ENCODE measurements at regions of chr11 and their contacts with region 1.

Region 1: DNA sequence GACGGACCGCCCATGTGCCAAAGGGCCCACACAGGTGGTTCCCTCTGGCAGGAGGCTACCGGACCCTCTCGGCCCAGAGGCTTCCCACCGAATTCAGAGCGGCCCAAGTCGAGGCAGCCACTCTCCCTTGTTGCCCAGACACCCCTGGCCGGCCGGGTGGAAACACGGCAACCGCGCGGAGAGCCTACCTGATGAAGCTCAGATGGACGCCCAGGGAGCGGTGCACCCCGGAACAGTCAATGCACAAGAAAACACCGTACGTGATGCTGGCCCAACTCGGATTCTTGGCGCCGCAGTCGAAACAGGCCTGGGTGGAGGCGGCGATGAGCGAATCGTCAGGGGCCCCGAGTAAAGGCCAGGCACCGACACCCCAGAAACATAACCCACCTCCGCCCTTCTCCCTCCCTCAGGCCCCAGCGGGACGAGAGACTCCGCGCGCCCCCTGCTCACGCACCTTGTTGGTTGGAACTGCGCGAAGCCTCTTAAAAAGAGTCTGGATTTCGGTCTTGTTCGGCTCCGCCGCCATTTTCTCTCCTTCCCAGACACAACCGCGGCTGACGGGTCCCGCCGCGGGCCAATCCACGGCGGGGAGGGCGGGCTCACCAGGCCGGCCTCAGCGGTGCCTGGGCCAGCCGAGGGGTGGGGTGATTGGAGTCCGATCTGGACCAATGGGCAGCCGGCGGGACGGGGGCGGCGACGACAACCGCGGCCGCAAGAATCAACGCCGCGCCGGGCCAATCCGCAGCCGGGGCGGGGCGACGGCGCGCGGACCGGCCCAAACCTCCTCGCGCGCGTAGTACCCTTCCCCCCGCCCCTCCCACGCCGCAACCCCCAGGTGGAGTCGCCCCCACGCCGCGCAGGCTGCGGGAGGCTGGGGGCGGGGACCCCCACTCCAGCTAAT is at the start of gene ARFGAP2:
- DNase-seq: peak; percentile 97 to 98
- ATAC-seq: peak; percentile 89 to 97 (median 94)
- H3K4me3 ChIP-seq: peak within 1 kb of the TSS; percentile 91
- H3K4me3 Mint-ChIP-seq: peak within 1 kb of the TSS; percentile 97
- H3K27ac ChIP-seq: peak within 1 kb of the TSS; percentile 95
- H3K27ac Mint-ChIP-seq: peak within 1 kb of the TSS; percentile 96
- H3K4me1 ChIP-seq: peaks cover 33% of the 10 kb centered on the region
- H3K4me1 Mint-ChIP-seq: peaks cover 24 to 47% of the 10 kb centered on the region in 2 donors
- H3K27me3 ChIP-seq: no peaks in the 10 kb centered on the region
- H3K27me3 Mint-ChIP-seq: peaks cover 0 to 3% of the 10 kb centered on the region in 2 donors
- CTCF ChIP-seq: no peak
- total RNA-seq, gene ARFGAP2: 199 to 236 (median 228) TPM

Region 2: GRCh38 chr11:46896719-46897406 is 279.7 kb before region 1 on chr11:
- intact Hi-C with region 1: no loop called
- DNase-seq: peak in 1 of 2 donors; percentile 34
- ATAC-seq: peak in 2 of 3 donors; percentile 34 to 46
- H3K4me3 ChIP-seq: no peak overlapping the region
- H3K4me3 Mint-ChIP-seq: no peak overlapping the region
- H3K27ac ChIP-seq: no peak overlapping the region
- H3K27ac Mint-ChIP-seq: no peak overlapping the region
- H3K4me1 ChIP-seq: no peaks in the 10 kb centered on the region
- H3K4me1 Mint-ChIP-seq: no peaks in the 10 kb centered on the region
- H3K27me3 ChIP-seq: no peaks in the 10 kb centered on the region
- H3K27me3 Mint-ChIP-seq: no peaks in the 10 kb centered on the region
- CTCF ChIP-seq: no peak

Region 3: GRCh38 chr11:47213985-47214564 is 37.5 kb after region 1 on chr11:
- intact Hi-C with region 1: loop called (anchors 2 kb)
- DNase-seq: peak; percentile 65 to 89
- ATAC-seq: peak; percentile 67 to 90 (median 82)
- H3K4me3 ChIP-seq: peak overlapping the region; percentile 98
- H3K4me3 Mint-ChIP-seq: peak overlapping the region; percentile 99
- H3K27ac ChIP-seq: peak overlapping the region; percentile 96
- H3K27ac Mint-ChIP-seq: peak overlapping the region; percentile 95 to 98
- H3K4me1 ChIP-seq: peaks cover 32% of the 10 kb centered on the region
- H3K4me1 Mint-ChIP-seq: peaks cover 30 to 36% of the 10 kb centered on the region in 2 donors
- H3K27me3 ChIP-seq: no peaks in the 10 kb centered on the region
- H3K27me3 Mint-ChIP-seq: no peaks in the 10 kb centered on the region
- CTCF ChIP-seq: no peak

Region 4: DNA sequence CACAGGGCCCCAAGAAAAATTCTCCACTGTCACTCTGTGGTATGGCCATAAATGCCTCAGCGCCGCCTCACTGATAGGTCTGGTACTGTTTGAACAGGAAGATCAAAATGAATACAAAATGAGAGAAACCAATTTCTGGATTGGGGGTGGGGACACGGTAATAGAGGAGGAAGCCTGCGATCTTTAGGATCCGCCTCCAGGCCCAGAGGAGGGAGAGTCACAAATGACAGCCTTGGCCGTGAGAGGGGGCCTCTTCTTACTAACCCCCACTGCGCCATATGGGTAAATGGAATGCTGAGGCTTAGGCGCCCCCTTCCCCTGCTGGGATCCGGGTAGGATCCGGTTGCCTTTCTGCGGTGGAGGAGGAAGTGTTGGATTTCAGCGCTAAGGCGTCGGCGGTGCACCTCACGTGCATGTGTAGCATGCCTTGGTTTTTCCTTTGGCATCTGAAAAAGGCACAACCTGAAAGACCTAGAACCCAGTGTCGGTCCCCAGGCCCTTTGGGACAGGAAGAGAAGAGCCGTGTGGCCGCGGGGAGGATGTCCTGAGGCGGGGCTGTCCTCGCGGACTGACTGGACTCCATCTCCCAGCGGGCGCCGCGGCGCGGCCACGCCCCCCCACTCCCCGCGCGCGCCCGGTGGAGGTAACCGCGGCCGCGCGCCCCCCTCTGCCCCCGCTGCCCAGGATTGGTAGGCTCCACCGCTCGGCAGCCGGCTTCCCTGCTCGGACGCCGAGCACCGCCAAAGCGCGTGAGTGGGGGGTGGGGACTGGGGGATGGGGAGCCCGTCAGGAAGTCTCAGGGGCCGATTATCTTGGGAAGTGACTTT is 92.6 kb after region 1 on chr11:
- intact Hi-C with region 1: loop called (anchors 2 kb)
- DNase-seq: peak; percentile 79 to 91
- ATAC-seq: peak; percentile 54 to 82 (median 68)
- H3K4me3 ChIP-seq: peak overlapping the region; percentile 58
- H3K4me3 Mint-ChIP-seq: peak overlapping the region; percentile 92
- H3K27ac ChIP-seq: peak overlapping the region; percentile 94
- H3K27ac Mint-ChIP-seq: peak overlapping the region; percentile 76 to 87
- H3K4me1 ChIP-seq: peaks cover 54% of the 10 kb centered on the region
- H3K4me1 Mint-ChIP-seq: peaks cover 54 to 56% of the 10 kb centered on the region in 2 donors
- H3K27me3 ChIP-seq: no peaks in the 10 kb centered on the region
- H3K27me3 Mint-ChIP-seq: no peaks in the 10 kb centered on the region
- CTCF ChIP-seq: no peak